ENCODE measurements at regions of chr15 and their contacts with region 1.

Region 1: DNA sequence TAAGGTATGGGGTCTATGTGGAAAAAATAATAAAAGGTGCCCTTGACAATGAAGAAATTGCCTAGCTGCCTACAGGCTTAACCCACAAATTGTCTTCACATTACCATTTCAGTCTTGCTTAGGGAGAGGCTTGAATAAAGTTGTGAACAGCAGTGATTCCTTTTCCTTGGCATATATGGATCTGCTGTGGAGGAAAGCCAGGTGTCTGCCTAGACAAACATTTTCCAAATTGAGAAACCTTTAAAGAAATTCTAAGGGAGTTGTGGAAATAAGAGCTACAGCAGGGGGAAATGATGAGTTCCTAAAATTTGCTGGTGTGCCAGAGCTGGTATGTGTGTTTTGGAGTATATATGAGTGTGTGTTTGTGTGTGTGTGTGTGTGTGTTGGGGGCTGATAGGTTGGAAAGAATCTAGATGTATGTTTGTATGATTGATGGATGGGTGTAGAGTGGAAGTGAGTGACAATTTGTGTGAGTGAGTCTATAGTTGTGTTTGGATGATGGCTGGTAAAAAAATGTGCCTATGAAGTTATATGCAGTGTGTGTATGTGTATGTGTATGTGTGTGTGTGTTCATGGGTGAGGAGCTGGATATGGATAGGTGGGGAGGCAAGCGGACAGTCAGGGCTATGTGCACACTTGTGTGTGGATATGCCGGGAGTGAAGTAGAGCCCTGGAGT is 451.9 kb downstream of the NTRK3 start:
- DNase-seq: no peak
- H3K4me3 ChIP-seq: no peak overlapping the region
- CTCF ChIP-seq: no peak

Region 2: GRCh38 chr15:87736401-87736800 is 68.2 kb before region 1 on chr15:
- in situ Hi-C with region 1: loop called (anchors 5 kb)
- DNase-seq: peak; percentile 28
- H3K4me3 ChIP-seq: no peak overlapping the region
- CTCF ChIP-seq: no peak

Region 3: DNA sequence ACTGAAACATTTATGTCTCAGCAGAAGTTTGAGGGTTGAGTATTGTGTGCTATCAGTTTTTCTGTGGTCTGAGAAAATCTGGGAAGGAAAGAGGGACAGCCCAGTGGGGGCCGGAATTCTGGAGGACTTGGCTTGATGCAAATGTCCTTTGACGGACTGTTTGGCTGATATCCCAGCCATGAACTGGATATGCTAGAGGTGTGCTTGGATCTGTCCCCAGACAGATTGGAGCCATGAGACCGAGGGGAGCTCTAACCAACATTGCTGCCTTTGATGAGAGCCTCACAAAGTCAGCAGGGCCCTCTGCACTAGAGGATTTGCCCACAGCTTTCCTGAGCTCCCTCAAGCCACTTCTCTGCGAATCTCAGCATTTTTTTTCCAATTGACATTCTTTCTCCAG is 46.3 kb after region 1 on chr15:
- in situ Hi-C with region 1: no loop called
- DNase-seq: peak; percentile 76
- H3K4me3 ChIP-seq: no peak overlapping the region
- CTCF ChIP-seq: no peak

Region 4: GRCh38 chr15:88002706-88003105 is 198.1 kb after region 1 on chr15:
- in situ Hi-C with region 1: no loop called
- DNase-seq: no peak
- H3K4me3 ChIP-seq: no peak overlapping the region
- CTCF ChIP-seq: no peak